ENCODE measurements at regions of chr19 and their contacts with region 1.

Region 1: GRCh38 chr19:54024660-54025059 is 33.2 kb downstream of the CACNG6 start:
- DNase-seq: no peak
- ATAC-seq: no peak
- H3K4me3 ChIP-seq: no peak overlapping the region
- H3K4me3 Mint-ChIP-seq: no peak overlapping the region
- H3K27ac ChIP-seq: no peak overlapping the region
- H3K27ac Mint-ChIP-seq: no peak overlapping the region
- H3K4me1 ChIP-seq: peaks cover 5% of the 10 kb centered on the region
- H3K4me1 Mint-ChIP-seq: peaks cover 0 to 11% of the 10 kb centered on the region in 2 donors
- H3K27me3 ChIP-seq: peaks cover 2% of the 10 kb centered on the region
- H3K27me3 Mint-ChIP-seq: peaks cover 9 to 10% of the 10 kb centered on the region in 2 donors
- CTCF ChIP-seq: no peak

Region 2: GRCh38 chr19:53772943-53773342 is 251.7 kb before region 1 on chr19:
- intact Hi-C with region 1: loop called (anchors 2 kb)
- DNase-seq: peak; percentile 17 to 74
- ATAC-seq: peak in 2 of 3 donors; percentile 69 to 70
- H3K4me3 ChIP-seq: no peak overlapping the region
- H3K4me3 Mint-ChIP-seq: no peak overlapping the region
- H3K27ac ChIP-seq: no peak overlapping the region
- H3K27ac Mint-ChIP-seq: no peak overlapping the region
- H3K4me1 ChIP-seq: no peaks in the 10 kb centered on the region
- H3K4me1 Mint-ChIP-seq: peaks cover 5% of the 10 kb centered on the region in 2 donors
- H3K27me3 ChIP-seq: no peaks in the 10 kb centered on the region
- H3K27me3 Mint-ChIP-seq: peaks cover 7% of the 10 kb centered on the region in 2 donors
- CTCF ChIP-seq: peak; percentile 75

Region 3: DNA sequence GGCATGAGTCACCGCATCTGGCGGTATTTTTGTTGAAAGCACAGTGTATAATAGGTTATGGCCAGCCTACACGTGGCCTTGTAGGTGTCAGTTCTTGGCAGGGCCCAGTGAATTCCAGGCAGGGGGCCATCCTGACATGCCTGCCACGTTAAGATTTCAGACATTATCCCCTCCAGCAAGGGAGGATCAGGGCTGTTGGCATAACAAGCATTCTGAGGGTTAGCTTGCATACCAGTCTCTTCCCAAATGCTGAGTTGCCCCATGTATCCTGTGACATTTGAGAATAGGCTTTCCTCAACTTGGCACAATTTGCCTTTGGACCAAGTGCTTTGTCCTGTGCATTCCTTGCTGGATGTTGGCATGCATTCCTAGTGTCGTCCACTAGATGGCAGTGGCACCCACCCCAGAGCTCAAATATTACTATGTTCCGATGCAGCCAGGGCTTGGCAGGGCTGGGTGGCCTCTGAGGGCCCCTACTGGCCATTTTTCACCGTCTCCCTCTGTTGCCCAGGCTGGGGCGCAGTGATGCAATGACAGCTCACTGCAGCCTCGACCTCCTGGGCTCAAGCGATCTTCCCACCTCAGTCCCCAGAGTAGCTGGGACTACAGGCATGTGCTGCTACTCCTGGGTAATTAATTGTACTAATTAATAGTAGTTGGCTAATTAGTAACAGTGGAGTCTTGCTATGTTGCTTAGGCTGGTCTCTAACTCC is 231.8 kb before region 1 on chr19:
- intact Hi-C with region 1: loop called (anchors 2 kb)
- DNase-seq: peak; percentile 67 to 86
- ATAC-seq: peak; percentile 100
- H3K4me3 ChIP-seq: no peak overlapping the region
- H3K4me3 Mint-ChIP-seq: no peak overlapping the region
- H3K27ac ChIP-seq: no peak overlapping the region
- H3K27ac Mint-ChIP-seq: no peak overlapping the region
- H3K4me1 ChIP-seq: no peaks in the 10 kb centered on the region
- H3K4me1 Mint-ChIP-seq: no peaks in the 10 kb centered on the region
- H3K27me3 ChIP-seq: no peaks in the 10 kb centered on the region
- H3K27me3 Mint-ChIP-seq: no peaks in the 10 kb centered on the region
- CTCF ChIP-seq: peak; percentile 96

Region 4: GRCh38 chr19:53844849-53845246 is 179.8 kb before region 1 on chr19:
- intact Hi-C with region 1: loop called (anchors 1 kb)
- DNase-seq: no peak
- ATAC-seq: peak in 1 of 3 donors; percentile 62
- H3K4me3 ChIP-seq: no peak overlapping the region
- H3K4me3 Mint-ChIP-seq: no peak overlapping the region
- H3K27ac ChIP-seq: no peak overlapping the region
- H3K27ac Mint-ChIP-seq: no peak overlapping the region
- H3K4me1 ChIP-seq: peaks cover 3% of the 10 kb centered on the region
- H3K4me1 Mint-ChIP-seq: peaks cover 0 to 5% of the 10 kb centered on the region in 2 donors
- H3K27me3 ChIP-seq: no peaks in the 10 kb centered on the region
- H3K27me3 Mint-ChIP-seq: peaks cover 15 to 19% of the 10 kb centered on the region in 2 donors
- CTCF ChIP-seq: no peak

Region 5: DNA sequence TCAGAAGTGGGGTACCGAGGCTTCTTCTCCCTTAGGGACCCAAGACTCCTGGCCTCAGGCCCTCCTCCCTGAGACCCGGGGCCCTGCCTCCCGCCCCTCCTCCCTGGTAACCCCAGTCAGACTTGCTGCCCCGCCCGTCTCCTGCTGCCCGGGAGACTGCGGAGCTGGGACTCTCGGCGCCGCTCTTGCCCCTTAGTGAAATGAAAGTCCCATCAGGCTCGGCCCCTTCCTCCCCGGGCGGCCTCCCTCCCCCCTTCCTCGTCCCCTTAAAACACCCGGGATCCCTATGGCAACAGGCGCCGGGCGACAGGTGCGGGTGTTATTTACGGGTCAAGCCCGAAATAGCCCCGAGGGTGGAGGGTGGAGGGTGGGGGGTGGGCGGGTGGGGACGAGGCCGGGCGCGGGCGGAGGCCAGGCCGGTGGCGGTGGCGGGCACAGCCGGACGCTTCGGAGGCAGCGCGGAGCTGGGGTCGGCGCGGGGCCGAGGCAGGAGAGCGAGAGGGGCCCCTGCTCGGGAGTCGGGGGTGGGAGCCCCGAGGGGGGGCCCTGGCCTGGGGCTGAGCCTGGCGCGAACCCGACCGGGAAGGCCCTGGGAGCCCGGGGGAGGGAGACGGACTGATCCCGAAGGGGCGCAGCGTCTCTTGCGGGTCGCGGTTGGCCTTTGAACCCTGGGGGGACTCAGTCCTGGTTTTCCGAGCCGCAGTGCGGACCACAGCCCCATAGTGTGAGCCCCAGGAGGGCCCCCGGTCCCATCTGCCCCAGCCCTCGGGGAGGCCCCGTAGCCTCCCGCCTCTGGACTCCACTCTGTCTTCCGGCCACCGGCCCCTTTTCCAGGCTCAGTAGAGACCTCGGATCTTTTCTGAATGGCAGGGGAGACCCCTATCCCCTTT is 33.2 kb before region 1 on chr19 and contains the start of gene CACNG6:
- intact Hi-C with region 1: no loop called
- DNase-seq: no peak
- ATAC-seq: no peak
- H3K4me3 ChIP-seq: no peak within 1 kb of the TSS
- H3K4me3 Mint-ChIP-seq: peak within 1 kb of the TSS; percentile 57
- H3K27ac ChIP-seq: no peak within 1 kb of the TSS
- H3K27ac Mint-ChIP-seq: no peak within 1 kb of the TSS
- H3K4me1 ChIP-seq: peaks cover 8% of the 10 kb centered on the region
- H3K4me1 Mint-ChIP-seq: peaks cover 0 to 6% of the 10 kb centered on the region in 2 donors
- H3K27me3 ChIP-seq: peaks cover 12% of the 10 kb centered on the region
- H3K27me3 Mint-ChIP-seq: peaks cover 41 to 42% of the 10 kb centered on the region in 2 donors
- CTCF ChIP-seq: no peak
- total RNA-seq, gene CACNG6: 11.5 TPM in 1 of 3 donors, not detected in the others

Measured in natural killer cell (primary cell).